MCF 10A (cell line): ENCODE measurements at regions of chr4 and their contacts with region 1.

Region 1: GRCh38 chr4:147590249-147590920 is 26.8 kb upstream of the TMEM184C start:
- DNase-seq: peak; percentile 76
- H3K4me3 Mint-ChIP-seq: no peak overlapping the region
- H3K27ac Mint-ChIP-seq: no peak overlapping the region
- H3K4me1 Mint-ChIP-seq: peaks cover under 1% of the 10 kb centered on the region
- H3K27me3 Mint-ChIP-seq: no peaks in the 10 kb centered on the region
- CTCF ChIP-seq: peak; percentile 81

Region 2: GRCh38 chr4:147019061-147019460 is 571.3 kb before region 1 on chr4:
- CTCF ChIA-PET with region 1: interaction called, 30 read pairs
- POLR2A ChIA-PET with region 1: interaction called, 3 read pairs
- intact Hi-C with region 1: loop called (anchors 1 kb)
- DNase-seq: peak; percentile 84
- H3K4me3 Mint-ChIP-seq: no peak overlapping the region
- H3K27ac Mint-ChIP-seq: no peak overlapping the region
- H3K4me1 Mint-ChIP-seq: peaks cover 26% of the 10 kb centered on the region
- H3K27me3 Mint-ChIP-seq: no peaks in the 10 kb centered on the region
- CTCF ChIP-seq: peak; percentile 89

Region 3: DNA sequence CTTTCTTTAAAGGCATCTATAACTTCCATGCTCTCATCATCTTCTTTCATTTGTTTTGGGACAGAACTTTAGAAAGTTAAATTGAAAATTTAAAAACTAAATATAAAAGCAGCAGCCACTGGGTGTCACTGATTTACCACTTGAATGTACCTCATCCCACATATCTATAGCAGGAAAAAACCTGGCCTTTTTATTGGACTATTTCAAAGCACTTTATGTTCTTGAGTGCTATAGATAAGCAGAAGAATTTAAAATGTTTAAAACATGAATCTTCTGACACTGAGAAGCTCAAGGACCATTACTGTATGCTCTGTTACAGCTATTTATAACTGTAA is 479.4 kb before region 1 on chr4:
- CTCF ChIA-PET with region 1: interaction called, 32 read pairs
- POLR2A ChIA-PET with region 1: interaction called, 3 read pairs
- intact Hi-C with region 1: loop called (anchors 1 kb)
- DNase-seq: no peak
- H3K4me3 Mint-ChIP-seq: no peak overlapping the region
- H3K27ac Mint-ChIP-seq: no peak overlapping the region
- H3K4me1 Mint-ChIP-seq: no peaks in the 10 kb centered on the region
- H3K27me3 Mint-ChIP-seq: no peaks in the 10 kb centered on the region
- CTCF ChIP-seq: peak; percentile 8

Region 4: GRCh38 chr4:147371661-147372060 is 218.7 kb before region 1 on chr4:
- CTCF ChIA-PET with region 1: interaction called, 8 read pairs
- POLR2A ChIA-PET with region 1: no interaction called
- intact Hi-C with region 1: loop called (anchors 10 kb)
- DNase-seq: peak; percentile 86
- H3K4me3 Mint-ChIP-seq: no peak overlapping the region
- H3K27ac Mint-ChIP-seq: peak overlapping the region; percentile 44
- H3K4me1 Mint-ChIP-seq: peaks cover 35% of the 10 kb centered on the region
- H3K27me3 Mint-ChIP-seq: no peaks in the 10 kb centered on the region
- CTCF ChIP-seq: no peak

Region 5: DNA sequence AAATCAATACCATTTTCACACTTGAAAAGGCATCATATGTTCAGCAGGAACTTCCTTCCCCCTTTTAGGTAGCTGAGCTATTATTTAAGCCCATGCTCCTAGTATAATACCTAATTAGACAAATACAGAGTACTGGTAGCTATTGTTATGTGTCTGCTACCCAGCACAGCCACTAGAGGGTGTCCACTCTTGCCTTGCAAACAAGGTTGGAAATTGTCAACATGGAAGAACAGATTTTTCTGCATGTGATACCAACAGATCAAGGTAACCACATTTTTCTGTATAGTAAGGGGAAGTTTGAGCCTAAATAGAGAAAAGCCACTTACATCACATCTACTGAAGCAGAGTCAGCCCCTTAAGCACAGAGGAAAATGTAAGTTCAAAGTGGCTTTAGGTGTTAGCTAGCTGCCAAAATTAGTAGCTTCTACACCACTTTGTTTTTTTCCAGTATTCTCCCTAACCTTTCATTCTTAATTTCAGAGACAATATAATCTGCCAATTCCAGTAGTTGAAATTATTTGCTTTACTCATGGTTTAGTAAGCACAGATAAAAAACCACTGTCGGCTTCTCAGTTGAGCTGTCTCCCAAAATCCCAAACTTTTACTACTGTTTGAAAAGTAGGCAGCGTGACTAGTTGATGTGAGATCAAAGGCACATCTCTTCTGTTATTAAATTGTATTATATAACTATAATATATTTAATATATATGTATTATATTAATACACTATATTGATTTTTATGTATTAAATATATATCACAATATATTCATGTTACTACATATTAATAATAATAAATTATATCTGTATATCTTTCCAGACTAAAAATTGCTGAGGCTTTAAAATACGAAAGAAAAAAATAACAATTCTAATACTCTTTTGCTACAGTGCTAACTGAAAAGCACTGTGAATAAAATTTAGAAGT is 71.3 kb before region 1 on chr4:
- CTCF ChIA-PET with region 1: interaction called, 60 read pairs
- POLR2A ChIA-PET with region 1: no interaction called
- intact Hi-C with region 1: loop called (anchors 1 kb)
- DNase-seq: peak; percentile 77
- H3K4me3 Mint-ChIP-seq: no peak overlapping the region
- H3K27ac Mint-ChIP-seq: no peak overlapping the region
- H3K4me1 Mint-ChIP-seq: peaks cover 21% of the 10 kb centered on the region
- H3K27me3 Mint-ChIP-seq: no peaks in the 10 kb centered on the region
- CTCF ChIP-seq: peak; percentile 77

Region 6: GRCh38 chr4:147714575-147715401 is 124.4 kb after region 1 on chr4:
- CTCF ChIA-PET with region 1: no interaction called
- POLR2A ChIA-PET with region 1: no interaction called
- intact Hi-C with region 1: loop called (anchors 2 kb)
- DNase-seq: peak; percentile 68
- H3K4me3 Mint-ChIP-seq: no peak overlapping the region
- H3K27ac Mint-ChIP-seq: no peak overlapping the region
- H3K4me1 Mint-ChIP-seq: no peaks in the 10 kb centered on the region
- H3K27me3 Mint-ChIP-seq: no peaks in the 10 kb centered on the region
- CTCF ChIP-seq: no peak

Region 7: GRCh38 chr4:147760695-147761094 is 170.3 kb after region 1 on chr4:
- CTCF ChIA-PET with region 1: no interaction called
- POLR2A ChIA-PET with region 1: no interaction called
- intact Hi-C with region 1: no loop called
- DNase-seq: no peak
- H3K4me3 Mint-ChIP-seq: no peak overlapping the region
- H3K27ac Mint-ChIP-seq: no peak overlapping the region
- H3K4me1 Mint-ChIP-seq: peaks cover 35% of the 10 kb centered on the region
- H3K27me3 Mint-ChIP-seq: no peaks in the 10 kb centered on the region
- CTCF ChIP-seq: no peak

Region 8: DNA sequence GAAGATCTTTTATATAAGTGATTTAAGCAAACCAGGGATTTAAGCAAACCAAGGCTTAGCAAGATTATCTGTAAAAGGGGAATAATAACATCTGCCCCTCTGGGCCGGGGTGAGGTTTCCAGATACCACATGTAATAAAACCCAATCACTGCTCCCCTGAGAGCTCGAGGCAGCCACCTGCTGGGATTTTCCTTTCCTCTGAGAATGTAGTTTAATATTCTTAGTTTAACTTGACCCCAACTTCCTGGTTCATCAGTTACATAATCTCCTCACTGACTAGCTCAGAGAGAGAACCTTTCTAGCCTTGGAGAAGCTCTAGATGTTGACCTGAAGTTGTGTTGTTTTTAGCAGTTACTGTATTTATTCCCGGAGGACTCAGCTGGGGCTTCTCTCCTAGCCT is 463.9 kb after region 1 on chr4:
- CTCF ChIA-PET with region 1: no interaction called
- POLR2A ChIA-PET with region 1: no interaction called
- intact Hi-C with region 1: no loop called
- DNase-seq: peak; percentile 31
- H3K4me3 Mint-ChIP-seq: no peak overlapping the region
- H3K27ac Mint-ChIP-seq: no peak overlapping the region
- H3K4me1 Mint-ChIP-seq: no peaks in the 10 kb centered on the region
- H3K27me3 Mint-ChIP-seq: no peaks in the 10 kb centered on the region
- CTCF ChIP-seq: no peak